AG04449 (cell line): ENCODE measurements at regions of chr16 and their contacts with region 1.

Region 1: DNA sequence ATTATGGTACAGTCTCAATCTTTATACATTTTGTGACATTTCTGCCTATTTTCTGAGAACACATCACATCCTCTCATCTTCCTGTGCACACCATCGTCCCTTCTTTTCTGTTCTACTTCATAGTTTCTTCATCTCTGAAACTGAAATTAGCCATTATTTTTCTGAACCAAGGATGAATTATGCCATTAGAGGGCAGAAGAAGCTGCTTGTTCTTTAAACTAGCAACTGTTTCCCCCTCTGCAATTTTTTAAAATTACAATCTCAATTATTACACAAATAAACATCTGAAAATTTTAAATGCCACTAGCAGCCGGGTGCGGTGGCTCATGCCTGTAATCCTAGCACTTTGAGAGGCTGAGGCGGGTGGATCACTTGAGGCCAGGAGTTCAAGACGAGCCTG is 41.3 kb downstream of the RBBP6 start:
- DNase-seq: peak; percentile 14
- H3K4me3 ChIP-seq: no peak overlapping the region
- CTCF ChIP-seq: peak; percentile 28

Region 2: GRCh38 chr16:24598777-24599437 is 18.2 kb after region 1 on chr16:
- CTCF ChIA-PET with region 1: no interaction called
- POLR2A ChIA-PET with region 1: no interaction called
- DNase-seq: no peak
- H3K4me3 ChIP-seq: no peak overlapping the region
- CTCF ChIP-seq: no peak

Region 3: DNA sequence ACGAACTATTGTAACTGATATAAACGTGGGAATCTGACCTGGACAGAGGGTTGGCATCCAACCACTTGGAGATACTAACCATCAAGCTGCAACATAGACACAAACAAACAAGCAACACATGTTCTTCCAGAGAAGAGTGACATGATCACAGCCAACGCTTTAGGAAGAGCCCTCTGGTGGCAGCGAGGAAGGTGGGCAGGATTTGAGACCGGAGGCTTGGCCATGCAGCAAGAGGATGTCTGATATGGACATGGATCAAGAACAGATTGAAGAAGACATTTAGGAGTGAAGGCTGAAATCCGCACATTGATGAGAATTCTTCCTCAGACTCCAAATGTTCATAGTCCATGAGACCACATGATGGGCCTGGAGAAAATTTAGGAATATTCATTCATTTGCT is 108.5 kb after region 1 on chr16:
- CTCF ChIA-PET with region 1: interaction called, 72 read pairs
- POLR2A ChIA-PET with region 1: no interaction called
- DNase-seq: no peak
- H3K4me3 ChIP-seq: no peak overlapping the region
- CTCF ChIP-seq: peak; percentile 79

Region 4: DNA sequence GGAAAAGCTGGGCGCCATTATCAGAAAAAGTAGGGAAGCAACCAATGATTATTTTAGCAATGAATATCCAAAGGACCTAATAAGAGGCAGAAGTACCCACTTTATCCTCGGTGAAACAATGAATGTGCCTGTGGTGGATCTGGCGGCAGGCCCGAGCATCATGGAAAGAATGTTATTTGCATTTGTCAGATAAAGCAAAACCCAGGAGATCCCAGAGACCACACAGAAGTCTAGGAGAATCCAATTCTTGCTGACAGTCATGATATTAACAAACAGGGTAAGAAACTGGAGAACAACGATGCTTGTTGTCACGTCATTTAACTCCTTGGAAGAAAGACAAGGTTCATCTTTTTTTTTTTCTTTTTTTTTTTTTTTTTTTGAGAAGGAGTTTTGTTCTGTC is 136.7 kb after region 1 on chr16:
- CTCF ChIA-PET with region 1: no interaction called
- POLR2A ChIA-PET with region 1: no interaction called
- DNase-seq: no peak
- H3K4me3 ChIP-seq: no peak overlapping the region
- CTCF ChIP-seq: no peak

Region 5: GRCh38 chr16:24776501-24777220 is 196.0 kb after region 1 on chr16:
- CTCF ChIA-PET with region 1: interaction called, 15 read pairs
- POLR2A ChIA-PET with region 1: interaction called, 3 read pairs
- DNase-seq: no peak
- H3K4me3 ChIP-seq: no peak overlapping the region
- CTCF ChIP-seq: no peak

Region 6: DNA sequence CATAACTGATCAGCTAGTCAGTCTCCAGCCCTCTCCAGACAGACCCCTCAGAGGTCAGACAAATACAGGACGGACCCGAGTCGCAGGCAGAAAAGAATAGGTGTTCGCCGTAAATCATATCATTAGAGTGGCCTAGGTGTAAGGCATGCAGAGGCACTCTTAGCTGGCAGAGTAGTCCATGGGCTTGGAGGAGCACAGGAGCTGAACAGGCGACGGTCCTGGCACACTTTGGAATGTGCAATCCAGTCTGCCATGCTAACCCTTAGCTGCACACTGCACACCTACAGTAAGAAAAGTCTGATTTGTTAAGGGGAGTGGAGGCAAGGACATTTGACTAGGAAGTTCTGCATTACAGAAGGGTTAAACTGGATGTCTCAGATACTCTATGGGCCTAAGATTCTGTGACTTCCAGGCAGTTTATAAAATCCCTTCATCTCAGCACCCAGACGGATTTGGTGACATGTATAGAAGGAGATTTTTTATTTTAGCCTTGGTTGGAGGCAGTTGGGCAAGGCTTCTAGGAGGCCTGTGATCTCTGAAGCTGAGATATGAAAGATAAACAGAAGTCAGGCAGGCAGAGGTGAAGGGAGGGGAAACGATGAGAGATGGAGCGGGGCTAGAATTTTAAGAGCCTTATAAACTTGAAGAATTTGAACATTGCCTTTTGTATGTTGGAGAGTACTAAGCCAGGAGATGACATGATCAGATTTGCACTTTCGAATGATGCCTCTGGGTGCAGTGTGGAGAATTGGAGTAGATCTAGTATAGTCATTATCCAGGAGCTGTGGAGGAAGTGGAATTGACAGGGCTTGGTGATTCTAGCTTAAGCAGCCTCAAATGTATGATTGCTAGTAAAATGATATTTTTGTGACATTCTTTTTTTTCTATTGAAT is 230.5 kb after region 1 on chr16:
- CTCF ChIA-PET with region 1: interaction called, 14 read pairs
- POLR2A ChIA-PET with region 1: no interaction called
- DNase-seq: no peak
- H3K4me3 ChIP-seq: no peak overlapping the region
- CTCF ChIP-seq: no peak